Sciatic nerve (tissue), 2 donors: ENCODE measurements at regions of chr5 and their contacts with region 1.

Region 1: GRCh38 chr5:34756781-34757624 is 82.0 kb upstream of the TTC23L start:
- DNase-seq: no peak
- ATAC-seq: peak; percentile 44

Region 2: DNA sequence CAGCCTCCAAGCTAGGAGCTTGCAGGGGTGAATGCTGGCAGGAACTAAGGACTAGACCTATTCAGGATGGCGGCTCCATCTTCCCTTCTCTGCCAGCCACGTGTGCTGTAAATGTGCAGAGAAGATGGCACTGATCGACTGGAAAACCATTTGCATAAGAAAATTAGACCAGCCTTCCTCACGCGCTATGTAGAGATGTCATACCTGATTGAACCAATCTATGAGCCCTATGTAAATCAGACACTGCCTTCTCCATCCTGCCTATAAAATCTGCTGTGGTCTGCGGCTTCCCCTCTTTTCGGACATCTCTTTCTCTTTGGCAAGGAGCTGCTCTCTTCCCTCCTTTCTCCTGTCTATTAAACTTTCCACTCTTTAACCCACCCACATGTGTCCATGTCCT is 1954.2 kb before region 1 on chr5:
- intact Hi-C with region 1: loop called (anchors 5 kb)
- DNase-seq: no peak
- ATAC-seq: no peak

Region 3: GRCh38 chr5:33761139-33761538 is 995.9 kb before region 1 on chr5:
- intact Hi-C with region 1: no loop called
- DNase-seq: no peak
- ATAC-seq: no peak

Region 4: DNA sequence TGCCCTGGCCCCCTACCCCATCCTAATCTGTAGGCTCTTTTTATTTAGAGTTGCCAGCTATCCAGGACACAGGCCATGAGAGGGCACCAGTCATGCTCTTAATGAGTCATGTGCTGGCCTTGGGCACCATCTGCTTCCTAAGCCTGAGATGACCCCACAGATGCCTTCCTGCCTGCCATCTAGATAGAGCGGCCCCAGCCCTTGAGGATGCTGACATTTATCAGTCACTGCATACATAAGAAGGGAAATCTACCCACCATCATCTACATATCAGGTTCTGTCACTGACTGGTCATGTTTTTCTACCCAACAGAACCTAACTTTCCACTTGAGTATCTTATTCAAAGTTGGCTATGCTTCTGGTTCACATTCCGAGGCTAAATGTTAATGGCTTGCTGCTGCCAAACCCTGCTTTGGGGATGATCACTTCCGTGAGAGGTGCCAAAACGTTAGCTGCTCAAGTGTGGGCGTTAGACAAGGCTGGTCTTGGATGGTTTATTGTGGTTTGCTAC is 32.1 kb after region 1 on chr5:
- intact Hi-C with region 1: no loop called
- DNase-seq: no peak
- ATAC-seq: peak; percentile 79